ENCODE measurements at regions of chr12 and their contacts with region 1.

Region 1: DNA sequence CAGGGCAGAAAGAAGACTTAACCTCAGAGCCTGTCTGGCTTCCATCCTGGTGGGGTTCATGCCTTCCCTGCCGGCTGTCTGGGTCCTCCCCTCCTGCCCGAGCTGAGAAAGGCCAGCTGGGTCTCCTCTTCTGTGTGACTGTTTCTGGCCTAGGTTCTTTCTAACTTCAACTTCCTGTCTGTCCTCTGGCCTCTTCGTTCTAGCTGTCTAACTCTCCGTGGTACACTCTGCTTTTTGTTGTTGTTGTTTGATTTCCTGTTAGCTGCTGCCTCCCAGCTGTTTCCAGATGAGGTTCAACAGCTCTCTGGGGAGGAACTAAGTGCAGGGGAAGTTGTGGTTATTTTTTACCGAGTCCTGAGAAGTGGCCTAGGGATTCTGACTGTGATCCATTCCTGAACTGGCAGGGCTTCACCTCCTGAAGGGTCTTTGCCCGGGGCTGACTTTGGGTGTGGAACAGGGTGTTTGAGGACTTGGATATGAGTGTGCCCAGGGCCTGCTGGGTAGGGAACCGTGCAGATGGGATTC is 3.2 kb downstream of the MLXIP start:
- DNase-seq: peak; percentile 71
- H3K4me3 ChIP-seq: peak overlapping the region; percentile 81
- H3K27ac ChIP-seq: peak overlapping the region; percentile 80
- H3K4me1 ChIP-seq: peaks cover 15% of the 10 kb centered on the region
- H3K27me3 ChIP-seq: no peaks in the 10 kb centered on the region
- CTCF ChIP-seq: no peak

Region 2: GRCh38 chr12:122116707-122117535 is 35.2 kb after region 1 on chr12:
- intact Hi-C with region 1: loop called (anchors 5 kb)
- DNase-seq: peak; percentile 81
- H3K4me3 ChIP-seq: no peak overlapping the region
- H3K27ac ChIP-seq: peak overlapping the region; percentile 84
- H3K4me1 ChIP-seq: peaks cover 8% of the 10 kb centered on the region
- H3K27me3 ChIP-seq: no peaks in the 10 kb centered on the region
- CTCF ChIP-seq: no peak